Sciatic nerve (tissue), 2 donors: ENCODE measurements at regions of chr2 and their contacts with region 1.

Region 1: DNA sequence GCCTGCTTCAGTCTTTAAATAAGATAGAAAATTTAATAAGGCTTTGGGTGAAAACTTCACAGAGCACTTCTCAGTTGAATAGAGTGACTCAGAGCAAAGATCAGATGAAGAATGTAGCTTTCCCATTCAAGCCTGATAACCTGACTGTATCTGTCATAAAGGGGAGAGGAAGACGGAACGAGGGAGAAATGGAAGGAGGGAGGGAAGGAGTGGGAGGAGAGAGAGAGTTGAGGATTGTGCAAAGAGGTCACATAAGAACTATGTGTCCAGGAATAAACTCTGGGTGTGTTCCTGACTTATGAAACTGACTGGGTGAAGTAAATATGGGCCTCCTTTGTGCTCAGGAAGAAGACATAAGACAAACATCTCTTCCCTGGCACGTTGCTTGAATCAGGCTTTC is 385.5 kb downstream of the LPIN1 start:
- DNase-seq: no peak
- ATAC-seq: peak; percentile 97

Region 2: GRCh38 chr2:11103984-11104793 is 1027.8 kb before region 1 on chr2:
- intact Hi-C with region 1: loop called (anchors 10 kb)
- DNase-seq: no peak
- ATAC-seq: no peak